ENCODE measurements at regions of chr6 and their contacts with region 1.

Region 1: DNA sequence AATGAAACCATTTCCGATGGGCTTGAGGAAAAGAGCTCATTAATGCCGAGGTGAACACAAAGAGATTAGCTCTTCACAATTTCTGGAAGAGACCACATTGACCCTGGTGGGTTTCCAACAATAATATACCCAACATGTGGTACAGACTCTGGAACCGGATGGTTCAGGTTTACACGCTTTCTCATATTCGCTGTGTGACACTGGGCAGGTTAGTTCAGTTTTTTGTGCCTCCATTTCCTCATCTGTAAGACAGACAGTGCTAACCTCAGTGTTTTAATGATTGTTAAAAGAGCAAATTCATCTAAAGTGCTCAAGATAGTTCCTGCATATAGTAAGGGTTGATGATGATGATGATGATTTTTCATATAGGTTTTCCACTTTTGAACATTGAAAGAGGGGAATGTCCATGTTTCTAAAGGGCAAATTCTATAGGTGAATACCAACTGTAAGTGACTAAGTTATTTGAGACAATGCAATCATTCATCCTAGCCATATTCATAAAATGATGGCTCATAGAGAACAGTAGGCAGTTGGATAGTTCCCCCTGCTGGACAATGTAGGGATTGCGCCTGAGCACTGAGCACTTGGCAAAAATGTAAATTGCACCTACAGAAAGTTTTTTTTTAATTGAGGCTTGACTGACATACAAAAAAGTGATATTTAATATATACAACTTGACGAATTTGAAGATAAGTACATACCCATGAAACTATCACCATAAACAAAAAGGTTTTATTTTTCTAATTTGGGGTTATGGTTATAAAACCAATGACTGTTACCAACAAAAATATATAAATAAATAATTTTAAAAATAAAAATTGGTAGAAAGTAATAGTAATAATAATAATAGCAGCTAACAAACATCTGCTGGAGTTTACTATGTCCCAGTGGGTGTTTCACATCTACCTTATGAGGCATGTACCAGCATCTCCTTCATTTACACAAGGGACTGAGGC is 2.1 kb upstream of the PERP start:
- DNase-seq: no peak
- H3K4me3 ChIP-seq: peak overlapping the region in 3 of 4 donors; percentile 3 to 83 (median 72)
- H3K27ac ChIP-seq: peak overlapping the region; percentile 48 to 99 (median 98)
- H3K4me1 ChIP-seq: peaks cover 0 to 29% (median 4%) of the 10 kb centered on the region in 3 donors
- H3K27me3 ChIP-seq: peaks cover 0 to 6% (median 0%) of the 10 kb centered on the region in 4 donors
- CTCF ChIP-seq: peak; percentile 75 to 99 (median 99)
- POLR2A ChIP-seq: no peak

Region 2: DNA sequence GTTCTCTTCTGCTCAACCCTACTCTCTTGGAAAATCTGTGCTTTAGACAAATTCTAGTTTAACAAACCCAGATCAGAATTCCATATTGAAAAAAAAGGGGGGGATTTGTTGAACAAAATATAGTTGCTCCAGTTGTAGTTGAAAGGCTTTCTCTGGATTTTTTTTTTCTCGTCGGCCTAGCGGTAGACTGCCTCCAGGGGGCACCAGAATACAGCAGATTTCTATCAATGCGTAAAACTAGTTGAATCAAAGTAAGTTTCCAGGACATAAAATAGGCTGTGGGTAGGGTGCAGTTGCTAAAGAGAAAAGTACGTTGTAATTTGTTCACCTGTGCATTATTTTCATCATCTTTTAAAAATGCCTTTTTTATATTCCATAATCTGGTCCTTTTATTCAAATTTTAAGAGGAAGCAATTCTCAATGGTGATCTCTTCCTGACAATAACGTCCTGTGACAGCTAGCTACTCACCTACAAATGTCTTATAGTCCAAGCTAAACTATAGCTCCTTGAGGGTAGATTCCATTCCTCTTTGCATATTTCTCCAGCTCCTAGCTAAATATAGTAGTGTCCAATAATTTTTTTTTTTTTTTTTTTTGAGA is 107.5 kb before region 1 on chr6:
- intact Hi-C with region 1: loop called (anchors 2 kb)
- DNase-seq: no peak
- H3K4me3 ChIP-seq: no peak overlapping the region
- H3K27ac ChIP-seq: peak overlapping the region in 2 of 4 donors; percentile 17 to 75
- H3K4me1 ChIP-seq: peaks cover 0 to 44% (median 2%) of the 10 kb centered on the region in 3 donors
- H3K27me3 ChIP-seq: no peaks in the 10 kb centered on the region
- CTCF ChIP-seq: peak; percentile 74 to 93 (median 92)
- POLR2A ChIP-seq: no peak

Region 3: DNA sequence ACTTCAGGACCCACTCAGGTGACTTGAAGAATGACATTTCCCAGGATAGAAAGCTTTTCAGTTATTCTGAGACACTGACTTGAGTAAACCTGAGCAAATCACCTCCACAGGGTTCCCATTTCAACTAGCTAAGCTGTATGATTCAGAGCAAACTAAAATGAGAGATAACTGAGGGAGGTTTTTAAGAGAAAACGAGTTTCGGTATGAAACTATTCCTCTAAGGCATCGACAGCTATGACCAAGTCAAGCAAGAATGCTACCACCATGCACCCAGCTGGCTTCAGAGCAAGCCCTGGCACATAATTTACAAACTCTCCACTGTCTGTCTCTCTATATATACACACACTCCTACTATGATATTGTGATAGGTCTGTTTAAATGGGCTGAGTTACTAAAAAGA is 77.5 kb before region 1 on chr6:
- intact Hi-C with region 1: loop called (anchors 5 kb)
- DNase-seq: no peak
- H3K4me3 ChIP-seq: no peak overlapping the region
- H3K27ac ChIP-seq: peak overlapping the region; percentile 86 to 92 (median 90)
- H3K4me1 ChIP-seq: peaks cover 17 to 91% (median 40%) of the 10 kb centered on the region in 3 donors
- H3K27me3 ChIP-seq: no peaks in the 10 kb centered on the region
- CTCF ChIP-seq: no peak
- POLR2A ChIP-seq: no peak